Naive thymus-derived CD4-positive, alpha-beta T cell (primary cell): ENCODE measurements at regions of chr14 and their contacts with region 1.

Region 1: DNA sequence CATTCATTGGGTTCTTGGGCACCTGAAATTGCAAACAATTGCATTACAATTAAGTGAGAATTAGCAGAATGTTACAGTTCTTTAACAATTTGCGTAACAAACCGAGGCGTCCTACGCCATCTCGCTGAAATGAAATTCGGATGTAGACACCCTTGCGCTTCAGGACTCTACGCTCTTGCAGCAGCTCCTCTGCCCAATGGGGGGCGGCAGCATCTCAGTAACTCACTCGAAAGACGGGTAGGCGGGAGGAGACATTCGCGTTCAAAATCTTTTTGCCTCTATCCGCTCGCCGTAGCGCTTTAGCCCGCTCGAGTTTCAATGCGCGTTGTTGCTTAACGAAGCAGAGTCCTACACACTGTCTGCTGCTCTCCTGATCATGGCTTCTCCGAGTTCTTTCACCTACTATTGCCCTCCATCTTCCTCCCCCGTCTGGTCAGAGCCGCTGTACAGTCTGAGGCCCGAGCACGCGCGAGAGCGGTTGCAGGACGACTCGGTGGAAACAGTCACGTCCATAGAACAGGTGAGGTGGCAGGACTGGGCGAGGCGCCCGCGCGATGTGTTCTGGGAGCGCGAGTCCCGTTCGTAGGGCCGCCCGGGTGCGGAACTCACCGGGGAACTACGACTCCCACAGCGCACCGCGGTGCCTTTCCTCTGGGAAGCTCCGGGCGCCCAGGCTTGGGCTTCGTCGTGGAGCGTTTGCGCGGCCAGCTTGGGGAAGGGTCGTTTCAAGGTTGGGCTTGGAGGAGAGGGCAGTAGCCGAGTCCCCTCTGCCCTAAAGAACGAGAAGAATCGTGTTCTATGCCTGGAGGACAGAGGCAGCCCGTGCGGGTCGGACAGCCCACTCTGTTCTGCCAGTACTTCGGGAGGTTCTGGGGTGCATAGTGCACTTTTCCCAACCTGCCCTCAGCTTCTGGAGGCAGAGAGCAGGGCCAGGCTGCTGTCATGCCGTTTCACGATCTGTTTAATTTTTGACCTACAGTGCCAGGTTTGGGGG is at the start of gene FNTB:
- DNase-seq: peak; percentile 80 to 96 (median 94)
- ATAC-seq: peak; percentile 95
- H3K4me3 ChIP-seq: peak within 1 kb of the TSS; percentile 97
- H3K4me3 Mint-ChIP-seq: peak within 1 kb of the TSS; percentile 88 to 100 (median 95)
- H3K27ac ChIP-seq: peak within 1 kb of the TSS; percentile 76
- H3K27ac Mint-ChIP-seq: peak within 1 kb of the TSS; percentile 92 to 99 (median 96)
- H3K4me1 ChIP-seq: peaks cover 14 to 38% of the 10 kb centered on the region in 2 donors
- H3K4me1 Mint-ChIP-seq: peaks cover 41 to 68% (median 60%) of the 10 kb centered on the region in 7 donors
- H3K27me3 ChIP-seq: no peaks in the 10 kb centered on the region
- H3K27me3 Mint-ChIP-seq: peaks cover 0 to 29% (median 3%) of the 10 kb centered on the region in 5 donors
- total RNA-seq, gene FNTB: 10.4 to 19.7 (median 12.9) TPM

Region 2: GRCh38 chr14:64503478-64504309 is 483.2 kb before region 1 on chr14 and contains the start of gene ZBTB25:
- CTCF ChIA-PET with region 1: interaction called, 3 read pairs
- POLR2A ChIA-PET with region 1: interaction called, 3 read pairs
- intact Hi-C with region 1: loop called in 1 of 2 experiments (anchors 1 kb)
- DNase-seq: peak; percentile 88 to 100 (median 98)
- ATAC-seq: peak; percentile 81
- H3K4me3 ChIP-seq: peak within 1 kb of the TSS; percentile 88
- H3K4me3 Mint-ChIP-seq: peak within 1 kb of the TSS; percentile 88 to 100 (median 98)
- H3K27ac ChIP-seq: peak within 1 kb of the TSS; percentile 99
- H3K27ac Mint-ChIP-seq: peak within 1 kb of the TSS; percentile 96 to 100 (median 100)
- H3K4me1 ChIP-seq: peaks cover 41 to 49% of the 10 kb centered on the region in 2 donors
- H3K4me1 Mint-ChIP-seq: peaks cover 44 to 70% (median 55%) of the 10 kb centered on the region in 7 donors
- H3K27me3 ChIP-seq: no peaks in the 10 kb centered on the region
- H3K27me3 Mint-ChIP-seq: peaks cover 0 to 3% (median 0%) of the 10 kb centered on the region in 5 donors
- total RNA-seq, gene ZBTB25: 37.6 to 88.0 (median 60.6) TPM

Region 3: GRCh38 chr14:64823305-64823861 is 163.5 kb before region 1 on chr14:
- CTCF ChIA-PET with region 1: interaction called, 32 read pairs
- POLR2A ChIA-PET with region 1: no interaction called
- intact Hi-C with region 1: loop called in 1 of 2 experiments (anchors 1 kb)
- DNase-seq: peak; percentile 41 to 68 (median 59)
- ATAC-seq: peak; percentile 87
- H3K4me3 ChIP-seq: peak overlapping the region; percentile 19
- H3K4me3 Mint-ChIP-seq: peak overlapping the region in 5 of 10 donors; percentile 16 to 72 (median 60)
- H3K27ac ChIP-seq: no peak overlapping the region
- H3K27ac Mint-ChIP-seq: no peak overlapping the region
- H3K4me1 ChIP-seq: no peaks in the 10 kb centered on the region
- H3K4me1 Mint-ChIP-seq: peaks cover 0 to 9% (median 5%) of the 10 kb centered on the region in 7 donors
- H3K27me3 ChIP-seq: peaks cover 0 to 4% of the 10 kb centered on the region in 2 donors
- H3K27me3 Mint-ChIP-seq: peaks cover 6 to 56% (median 10%) of the 10 kb centered on the region in 5 donors

Region 4: DNA sequence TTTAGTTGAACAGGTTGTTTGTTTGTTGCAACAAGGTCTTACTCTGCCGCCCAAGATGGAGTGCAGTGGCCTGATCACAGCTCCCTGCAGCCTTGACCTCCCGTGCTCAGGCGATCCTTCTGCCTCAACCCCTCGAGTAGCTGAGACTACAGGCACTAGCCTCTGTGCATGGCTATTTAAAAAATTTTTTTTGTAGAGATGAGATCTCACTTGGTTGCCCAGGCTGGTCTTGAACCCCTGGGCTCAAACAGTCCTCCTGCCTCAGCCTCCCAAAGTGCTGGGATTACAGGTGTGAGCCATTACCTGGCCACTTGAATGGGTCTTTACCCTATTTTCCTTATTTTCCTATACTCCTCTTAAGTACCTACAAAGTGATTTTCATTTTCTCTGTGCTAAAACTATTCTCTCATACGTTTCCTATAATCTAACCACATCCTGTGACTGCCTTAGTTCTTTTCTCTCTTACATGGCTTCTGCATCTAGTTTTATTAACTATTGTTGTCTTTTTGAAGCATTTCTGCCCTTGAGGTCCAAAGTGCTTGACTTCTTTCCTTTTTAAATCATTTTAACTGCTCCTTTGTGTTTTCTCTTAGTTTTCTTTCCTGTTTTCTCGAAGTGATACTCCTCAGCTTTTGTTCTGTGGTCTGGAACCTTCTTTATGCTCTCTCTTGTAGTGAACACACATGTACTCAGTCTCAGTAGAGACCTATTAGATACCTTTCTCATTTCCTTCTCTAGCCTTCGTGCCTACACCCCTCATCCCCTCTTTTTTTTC is 58.4 kb before region 1 on chr14:
- CTCF ChIA-PET with region 1: interaction called, 6 read pairs
- POLR2A ChIA-PET with region 1: interaction called, 3 read pairs
- intact Hi-C with region 1: loop called in 1 of 2 experiments (anchors 1 kb)
- DNase-seq: peak in 7 of 9 donors; percentile 28 to 81 (median 76)
- ATAC-seq: peak; percentile 84
- H3K4me3 ChIP-seq: peak overlapping the region; percentile 16
- H3K4me3 Mint-ChIP-seq: no peak overlapping the region
- H3K27ac ChIP-seq: peak overlapping the region; percentile 67
- H3K27ac Mint-ChIP-seq: no peak overlapping the region
- H3K4me1 ChIP-seq: peaks cover 40 to 68% of the 10 kb centered on the region in 2 donors
- H3K4me1 Mint-ChIP-seq: peaks cover 17 to 36% (median 29%) of the 10 kb centered on the region in 7 donors
- H3K27me3 ChIP-seq: no peaks in the 10 kb centered on the region
- H3K27me3 Mint-ChIP-seq: no peaks in the 10 kb centered on the region

Region 5: DNA sequence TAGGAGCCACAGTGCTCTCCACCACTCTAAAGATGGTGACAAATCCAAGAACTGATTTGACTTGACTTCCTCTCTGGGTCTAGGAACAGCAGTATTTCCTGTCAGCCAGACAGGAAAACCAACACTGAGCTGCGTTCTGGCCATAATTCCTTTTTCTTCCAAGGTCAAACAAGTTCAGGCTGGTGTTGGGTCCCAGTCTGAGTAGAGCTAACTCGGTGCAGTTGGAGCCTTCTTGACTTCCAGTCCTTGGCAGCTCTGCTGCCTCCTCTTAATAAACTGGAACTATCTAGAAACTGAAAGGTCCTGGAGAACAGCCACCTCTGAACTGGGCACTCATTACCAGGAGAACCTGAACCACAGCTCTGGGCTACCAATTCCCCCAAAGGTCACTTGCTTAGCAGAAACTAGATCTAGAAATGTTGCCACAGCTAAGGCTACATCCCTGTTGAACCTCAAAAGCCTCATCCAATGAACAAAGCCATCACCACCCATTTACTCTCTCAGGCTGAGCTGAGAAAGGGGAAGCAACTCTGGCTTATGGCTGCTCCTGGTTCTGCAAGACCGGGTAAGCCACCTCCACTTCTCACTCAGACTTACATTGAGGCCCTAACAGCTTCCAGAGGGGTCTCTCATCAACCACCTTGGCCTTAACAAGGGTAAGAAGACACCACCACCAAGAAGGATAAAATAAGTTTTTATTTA is 87.7 kb after region 1 on chr14:
- CTCF ChIA-PET with region 1: no interaction called
- POLR2A ChIA-PET with region 1: no interaction called
- intact Hi-C with region 1: no loop called
- DNase-seq: no peak
- ATAC-seq: peak; percentile 51
- H3K4me3 ChIP-seq: no peak overlapping the region
- H3K4me3 Mint-ChIP-seq: no peak overlapping the region
- H3K27ac ChIP-seq: no peak overlapping the region
- H3K27ac Mint-ChIP-seq: peak overlapping the region; percentile 39 to 78 (median 56)
- H3K4me1 ChIP-seq: peaks cover 0 to 9% of the 10 kb centered on the region in 2 donors
- H3K4me1 Mint-ChIP-seq: peaks cover 25 to 48% (median 33%) of the 10 kb centered on the region in 7 donors
- H3K27me3 ChIP-seq: no peaks in the 10 kb centered on the region
- H3K27me3 Mint-ChIP-seq: no peaks in the 10 kb centered on the region

Region 6: GRCh38 chr14:65164068-65164824 is 177.4 kb after region 1 on chr14:
- CTCF ChIA-PET with region 1: interaction called, 3 read pairs
- POLR2A ChIA-PET with region 1: no interaction called
- intact Hi-C with region 1: loop called (anchors 1 to 2 kb)
- DNase-seq: peak in 7 of 9 donors; percentile 29 to 67 (median 58)
- ATAC-seq: peak; percentile 76
- H3K4me3 ChIP-seq: no peak overlapping the region
- H3K4me3 Mint-ChIP-seq: no peak overlapping the region
- H3K27ac ChIP-seq: no peak overlapping the region
- H3K27ac Mint-ChIP-seq: peak overlapping the region in 1 of 9 donors; percentile 67
- H3K4me1 ChIP-seq: no peaks in the 10 kb centered on the region
- H3K4me1 Mint-ChIP-seq: peaks cover 0 to 43% (median 0%) of the 10 kb centered on the region in 7 donors
- H3K27me3 ChIP-seq: no peaks in the 10 kb centered on the region
- H3K27me3 Mint-ChIP-seq: no peaks in the 10 kb centered on the region

Region 7: GRCh38 chr14:65847075-65847847 is 860.4 kb after region 1 on chr14:
- CTCF ChIA-PET with region 1: no interaction called
- POLR2A ChIA-PET with region 1: no interaction called
- intact Hi-C with region 1: loop called in 1 of 2 experiments (anchors 2 kb)
- DNase-seq: peak in 8 of 9 donors; percentile 67 to 94 (median 90)
- ATAC-seq: peak; percentile 90
- H3K4me3 ChIP-seq: peak overlapping the region; percentile 38
- H3K4me3 Mint-ChIP-seq: peak overlapping the region; percentile 70 to 88 (median 80)
- H3K27ac ChIP-seq: peak overlapping the region; percentile 74
- H3K27ac Mint-ChIP-seq: peak overlapping the region; percentile 91 to 99 (median 94)
- H3K4me1 ChIP-seq: peaks cover 63 to 85% of the 10 kb centered on the region in 2 donors
- H3K4me1 Mint-ChIP-seq: peaks cover 39 to 92% (median 88%) of the 10 kb centered on the region in 7 donors
- H3K27me3 ChIP-seq: no peaks in the 10 kb centered on the region
- H3K27me3 Mint-ChIP-seq: no peaks in the 10 kb centered on the region

Region 8: DNA sequence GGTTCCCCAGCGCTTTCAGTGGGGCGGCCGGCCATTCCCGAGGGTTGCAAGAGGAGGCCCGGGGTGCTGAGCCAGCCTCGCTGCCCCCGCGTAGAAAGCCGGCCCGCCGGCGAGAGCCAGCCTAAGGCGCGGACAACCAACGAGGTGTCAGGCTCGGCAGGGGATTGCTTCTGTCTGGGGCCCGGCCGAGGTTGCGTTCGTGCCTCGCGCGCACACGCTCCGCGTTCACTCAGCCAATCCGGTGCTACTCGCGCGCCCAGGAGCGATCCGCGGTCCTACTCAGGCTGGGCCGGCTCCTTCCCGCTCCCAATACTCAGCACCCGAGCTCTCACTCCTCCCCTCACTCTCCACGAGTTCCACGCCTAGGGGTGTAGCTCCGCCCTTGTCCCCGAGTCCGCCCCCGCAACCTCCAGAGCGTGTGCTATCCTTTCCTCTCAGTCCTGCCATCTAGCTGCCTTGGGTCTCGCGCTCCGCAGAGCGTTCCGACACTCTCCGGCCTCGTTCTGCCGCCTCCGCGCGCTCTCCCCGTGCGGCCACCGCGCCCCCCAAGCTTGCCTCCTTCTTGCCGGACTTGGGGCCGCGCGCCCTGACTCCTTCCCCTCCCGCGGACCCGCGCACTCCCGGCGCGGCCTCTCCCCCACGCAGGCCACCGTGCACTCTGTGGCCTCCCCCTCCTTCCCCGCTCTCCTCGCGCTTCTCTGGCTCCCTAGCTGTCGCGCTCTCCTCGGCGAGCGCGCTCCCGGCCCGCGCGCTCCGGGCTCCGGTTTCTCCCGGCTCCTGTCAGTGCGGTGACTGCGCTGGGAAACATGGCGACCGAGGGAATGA is 1521.1 kb after region 1 on chr14 and contains the start of gene GPHN:
- CTCF ChIA-PET with region 1: no interaction called
- POLR2A ChIA-PET with region 1: no interaction called
- intact Hi-C with region 1: loop called (anchors 5 kb)
- DNase-seq: peak; percentile 62 to 87 (median 82)
- ATAC-seq: peak; percentile 93
- H3K4me3 ChIP-seq: peak within 1 kb of the TSS; percentile 78
- H3K4me3 Mint-ChIP-seq: peak within 1 kb of the TSS; percentile 94 to 100 (median 99)
- H3K27ac ChIP-seq: peak within 1 kb of the TSS; percentile 70
- H3K27ac Mint-ChIP-seq: peak within 1 kb of the TSS; percentile 71 to 96 (median 91)
- H3K4me1 ChIP-seq: peaks cover 6 to 7% of the 10 kb centered on the region in 2 donors
- H3K4me1 Mint-ChIP-seq: peaks cover 16 to 42% (median 34%) of the 10 kb centered on the region in 7 donors
- H3K27me3 ChIP-seq: no peaks in the 10 kb centered on the region
- H3K27me3 Mint-ChIP-seq: peaks cover 0 to 29% (median 0%) of the 10 kb centered on the region in 5 donors
- total RNA-seq, gene GPHN: 11.8 to 28.1 (median 14.8) TPM